ENCODE measurements at regions of chr4 and their contacts with region 1.

Region 1: GRCh38 chr4:138562544-138562991 is 320.4 kb upstream of the SLC7A11 start:
- DNase-seq: no peak

Region 2: GRCh38 chr4:138669479-138670315 is 107.1 kb after region 1 on chr4:
- intact Hi-C with region 1: loop called (anchors 10 kb)
- DNase-seq: no peak